ENCODE measurements at regions of chr7 and their contacts with region 1.

Region 1: GRCh38 chr7:156556083-156556482 is 84.5 kb upstream of the RNF32 start:
- DNase-seq: no peak
- ATAC-seq: no peak
- H3K4me3 ChIP-seq: no peak overlapping the region
- H3K27ac ChIP-seq: no peak overlapping the region
- H3K4me1 ChIP-seq: no peaks in the 10 kb centered on the region
- H3K27me3 ChIP-seq: peaks cover 5% of the 10 kb centered on the region
- CTCF ChIP-seq: no peak

Region 2: GRCh38 chr7:156544919-156545723 is 11.0 kb before region 1 on chr7:
- CTCF ChIA-PET with region 1: no interaction called
- POLR2A ChIA-PET with region 1: interaction called, 12 read pairs
- in situ Hi-C with region 1: no loop called
- intact Hi-C with region 1: no loop called
- DNase-seq: no peak
- ATAC-seq: peak; percentile 56; the same call in 1 of the 2 replicates
- H3K4me3 ChIP-seq: no peak overlapping the region
- H3K27ac ChIP-seq: no peak overlapping the region
- H3K4me1 ChIP-seq: no peaks in the 10 kb centered on the region
- H3K27me3 ChIP-seq: no peaks in the 10 kb centered on the region
- CTCF ChIP-seq: no peak

Measured in Panc1 (cell line).